Heart right ventricle (tissue), 16 donors: ENCODE measurements at regions of chr9 and their contacts with region 1.

Region 1: GRCh38 chr9:119968836-119969707 is 599.8 kb upstream of the BRINP1 start:
- DNase-seq: peak; percentile 68 to 73
- ATAC-seq: peak; percentile 75 to 92 (median 86)
- H3K4me3 ChIP-seq: no peak overlapping the region
- H3K27ac ChIP-seq: no peak overlapping the region
- H3K4me1 ChIP-seq: peaks cover 0 to 10% (median 1%) of the 10 kb centered on the region in 9 donors
- H3K27me3 ChIP-seq: peaks cover 0 to 12% (median 0%) of the 10 kb centered on the region in 7 donors
- CTCF ChIP-seq: peak; percentile 80 to 93 (median 91)

Region 2: DNA sequence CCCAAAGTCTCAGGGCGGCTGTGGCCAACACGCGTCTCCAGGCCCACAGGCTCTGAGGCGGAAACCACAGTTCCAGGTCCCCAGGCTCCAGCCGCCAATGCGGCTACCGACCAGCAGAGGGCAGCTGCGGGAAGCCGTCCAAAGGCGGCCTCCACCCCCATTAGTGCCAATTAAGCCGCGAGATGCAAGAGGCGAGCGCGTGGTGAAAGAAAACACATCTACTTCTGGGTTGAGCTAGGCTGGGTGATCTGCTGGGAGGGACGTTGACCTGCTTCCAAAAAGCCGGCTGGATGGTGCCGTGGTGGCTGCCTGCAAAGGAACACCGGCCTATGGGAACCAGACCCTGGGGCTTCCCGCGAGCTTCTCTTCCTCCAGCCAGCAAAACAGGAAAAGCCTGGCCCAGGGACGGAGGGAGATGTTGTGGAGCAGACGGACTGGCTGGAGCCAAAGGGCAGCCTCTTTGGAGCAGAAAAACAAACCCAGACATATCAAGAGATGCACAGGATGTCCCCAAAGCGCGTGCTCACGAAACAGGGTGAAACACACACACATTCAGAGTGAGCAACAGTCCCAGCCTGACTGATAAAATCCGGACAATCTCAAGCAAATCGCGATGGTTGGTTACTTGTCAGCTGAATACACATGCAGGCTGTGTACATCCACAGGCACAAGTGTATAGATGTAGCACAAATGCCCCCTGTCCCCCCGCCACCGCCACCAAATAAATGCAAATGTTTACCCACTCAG is 412.8 kb before region 1 on chr9:
- intact Hi-C with region 1: loop called in 9 of 10 experiments (anchors 2 to 10 kb)
- DNase-seq: peak; percentile 61 to 80
- ATAC-seq: peak; percentile 79 to 95 (median 88)
- H3K4me3 ChIP-seq: peak overlapping the region in 9 of 10 donors; percentile 2 to 47 (median 42)
- H3K27ac ChIP-seq: peak overlapping the region in 3 of 10 donors; percentile 2 to 28 (median 9)
- H3K4me1 ChIP-seq: peaks cover 0 to 10% (median 6%) of the 10 kb centered on the region in 9 donors
- H3K27me3 ChIP-seq: peaks cover 0 to 38% (median 9%) of the 10 kb centered on the region in 7 donors
- CTCF ChIP-seq: peak; percentile 72 to 96 (median 92)

Region 3: DNA sequence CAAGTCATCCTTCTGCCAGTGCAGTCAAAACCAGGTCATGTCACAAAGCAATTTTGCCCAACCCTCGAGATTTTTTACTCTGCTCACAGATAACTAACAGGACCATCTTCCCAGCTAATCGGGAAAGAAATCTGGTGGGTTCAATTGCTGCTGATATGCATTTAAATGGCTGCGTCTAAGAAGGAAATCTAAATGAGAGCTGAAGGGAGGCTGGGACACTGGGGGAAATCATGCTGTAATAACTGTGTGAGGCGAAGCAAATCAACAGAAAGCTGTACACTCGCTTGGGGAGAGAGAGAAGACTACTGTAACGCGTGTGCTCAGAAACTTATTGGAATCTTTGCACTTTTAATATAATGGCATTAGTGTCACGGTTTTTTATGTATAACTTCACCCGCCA is 75.9 kb after region 1 on chr9:
- intact Hi-C with region 1: no loop called
- DNase-seq: no peak
- ATAC-seq: no peak
- H3K4me3 ChIP-seq: no peak overlapping the region
- H3K27ac ChIP-seq: no peak overlapping the region
- H3K4me1 ChIP-seq: no peaks in the 10 kb centered on the region
- H3K27me3 ChIP-seq: peaks cover 0 to 6% (median 0%) of the 10 kb centered on the region in 7 donors
- CTCF ChIP-seq: no peak

Region 4: GRCh38 chr9:120477521-120478001 is 508.5 kb after region 1 on chr9:
- intact Hi-C with region 1: loop called in 1 of 10 experiments (anchors 10 kb)
- DNase-seq: peak; percentile 36 to 42
- ATAC-seq: peak; percentile 69 to 87 (median 77)
- H3K4me3 ChIP-seq: no peak overlapping the region
- H3K27ac ChIP-seq: peak overlapping the region in 1 of 10 donors; percentile 43
- H3K4me1 ChIP-seq: peaks cover 0 to 63% (median 24%) of the 10 kb centered on the region in 9 donors
- H3K27me3 ChIP-seq: no peaks in the 10 kb centered on the region
- CTCF ChIP-seq: peak; percentile 61 to 98 (median 90)